Gastrocnemius medialis (tissue), 4 donors: ENCODE measurements at regions of chr9 and their contacts with region 1.

Region 1: DNA sequence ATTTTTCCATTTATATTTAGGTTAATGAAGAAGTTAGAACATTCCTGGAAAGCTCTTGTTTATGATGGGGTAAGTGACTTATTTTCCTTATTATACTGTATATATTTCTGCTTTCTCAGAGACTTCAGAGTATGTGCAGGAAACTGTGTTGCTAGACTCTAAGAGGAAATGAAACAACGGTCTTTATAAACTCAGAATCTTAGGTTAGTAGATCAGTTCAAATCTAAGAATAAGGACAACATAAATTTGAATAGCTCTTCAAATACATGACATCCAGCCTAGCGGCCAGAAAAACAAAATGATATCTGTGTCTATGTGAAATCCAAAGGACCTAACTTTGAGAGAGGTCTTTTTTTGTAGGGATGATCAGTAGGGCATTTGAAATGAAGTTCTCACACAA is 94.3 kb downstream of the PRKACG start:
- DNase-seq: no peak
- ATAC-seq: no peak
- H3K4me3 ChIP-seq: no peak overlapping the region
- H3K27ac ChIP-seq: no peak overlapping the region
- H3K4me1 ChIP-seq: peaks cover 0 to 3% of the 10 kb centered on the region in 2 donors
- H3K27me3 ChIP-seq: no peaks in the 10 kb centered on the region
- CTCF ChIP-seq: no peak
- POLR2A ChIP-seq: no peak

Region 2: GRCh38 chr9:68894502-68894901 is 25.2 kb before region 1 on chr9:
- in situ Hi-C with region 1: no loop called
- intact Hi-C with region 1: no loop called
- DNase-seq: no peak
- ATAC-seq: no peak
- H3K4me3 ChIP-seq: no peak overlapping the region
- H3K27ac ChIP-seq: no peak overlapping the region
- H3K4me1 ChIP-seq: peaks cover 0 to 2% of the 10 kb centered on the region in 2 donors
- H3K27me3 ChIP-seq: no peaks in the 10 kb centered on the region
- CTCF ChIP-seq: no peak
- POLR2A ChIP-seq: no peak

Region 3: GRCh38 chr9:68966496-68966944 is 46.9 kb after region 1 on chr9:
- in situ Hi-C with region 1: loop called in 1 of 4 experiments (anchors 10 kb)
- intact Hi-C with region 1: loop called (anchors 10 kb)
- DNase-seq: no peak
- ATAC-seq: no peak
- H3K4me3 ChIP-seq: no peak overlapping the region
- H3K27ac ChIP-seq: no peak overlapping the region
- H3K4me1 ChIP-seq: no peaks in the 10 kb centered on the region
- H3K27me3 ChIP-seq: no peaks in the 10 kb centered on the region
- CTCF ChIP-seq: no peak
- POLR2A ChIP-seq: no peak

Region 4: DNA sequence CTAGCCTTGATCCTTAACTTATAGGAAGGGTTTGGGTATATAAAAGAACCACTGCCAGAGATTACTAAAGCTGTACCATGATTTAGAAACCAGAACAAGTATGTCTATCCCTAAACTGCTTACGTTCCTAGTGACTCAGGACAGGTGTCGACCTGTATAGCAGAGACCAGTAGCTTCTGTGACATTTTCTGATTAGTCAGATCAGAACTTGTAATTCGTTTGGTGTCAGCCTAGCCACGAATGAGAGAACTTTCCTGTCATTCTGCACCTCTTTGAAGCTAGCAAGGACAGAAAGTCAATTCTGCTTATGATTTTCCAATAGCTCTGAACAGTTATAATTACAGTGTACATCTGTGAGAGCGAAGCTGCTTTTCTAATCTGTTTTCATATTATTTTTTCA is 54.8 kb after region 1 on chr9:
- in situ Hi-C with region 1: loop called in 1 of 4 experiments (anchors 10 kb)
- intact Hi-C with region 1: loop called (anchors 10 kb)
- DNase-seq: no peak
- ATAC-seq: no peak
- H3K4me3 ChIP-seq: no peak overlapping the region
- H3K27ac ChIP-seq: no peak overlapping the region
- H3K4me1 ChIP-seq: peaks cover 0 to 2% of the 10 kb centered on the region in 2 donors
- H3K27me3 ChIP-seq: no peaks in the 10 kb centered on the region
- CTCF ChIP-seq: no peak
- POLR2A ChIP-seq: no peak